Caco-2 (cell line): ENCODE measurements at regions of chr9 and their contacts with region 1.

Region 1: DNA sequence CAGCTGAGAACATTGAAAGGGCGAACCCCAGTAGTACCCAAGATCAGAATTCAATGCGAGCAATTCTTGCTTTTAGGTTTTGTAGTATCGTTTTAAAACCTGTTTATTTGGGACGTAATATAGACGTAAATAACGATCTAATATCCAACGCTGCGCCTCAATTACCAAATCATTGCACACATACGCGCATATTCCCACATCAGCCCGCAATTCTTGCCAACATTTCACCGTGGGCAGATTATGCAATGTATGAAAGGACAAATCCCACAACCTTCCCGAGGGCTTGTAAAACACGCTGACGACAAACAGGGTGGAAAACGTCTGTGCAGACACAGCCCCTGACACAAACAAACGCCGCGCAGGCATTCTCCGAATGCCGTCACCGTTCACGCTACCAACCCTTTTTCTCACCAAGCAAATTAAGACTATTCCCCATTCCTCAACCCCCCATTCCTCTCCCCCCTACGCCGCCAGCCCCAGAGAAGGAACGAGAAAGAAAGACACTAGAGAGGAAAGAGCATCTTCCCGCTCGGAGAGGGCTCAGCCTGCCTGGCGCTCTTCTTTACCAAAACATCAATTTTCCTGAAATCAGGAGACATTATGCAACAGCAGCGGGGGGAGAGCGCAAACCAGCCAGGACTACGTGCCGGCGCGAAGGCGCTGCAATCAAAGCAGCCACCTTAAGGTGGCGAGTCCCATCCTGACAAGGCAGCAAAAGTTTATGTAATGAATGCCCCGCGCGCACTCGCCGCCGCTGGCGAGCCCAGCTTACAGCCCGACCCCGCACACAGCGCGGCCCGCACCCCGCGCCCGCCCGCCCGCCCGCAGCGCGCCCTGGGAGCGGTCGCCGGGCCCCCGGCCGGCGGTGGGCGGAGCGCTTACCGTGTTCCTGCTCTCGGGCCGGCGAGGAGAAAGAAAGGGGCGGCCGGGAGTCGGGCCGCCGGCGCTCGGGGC is 597 bp downstream of the NFIL3 start:
- DNase-seq: peak; percentile 53 to 58
- H3K4me3 ChIP-seq: peak overlapping the region; percentile 63
- H3K4me3 Mint-ChIP-seq: peak overlapping the region; percentile 100
- H3K27ac Mint-ChIP-seq: peak overlapping the region; percentile 96
- H3K4me1 ChIP-seq: peaks cover 11% of the 10 kb centered on the region
- H3K4me1 Mint-ChIP-seq: peaks cover 6% of the 10 kb centered on the region
- H3K27me3 ChIP-seq: no peaks in the 10 kb centered on the region
- H3K27me3 Mint-ChIP-seq: peaks cover under 1% of the 10 kb centered on the region
- CTCF ChIP-seq: no peak

Region 2: DNA sequence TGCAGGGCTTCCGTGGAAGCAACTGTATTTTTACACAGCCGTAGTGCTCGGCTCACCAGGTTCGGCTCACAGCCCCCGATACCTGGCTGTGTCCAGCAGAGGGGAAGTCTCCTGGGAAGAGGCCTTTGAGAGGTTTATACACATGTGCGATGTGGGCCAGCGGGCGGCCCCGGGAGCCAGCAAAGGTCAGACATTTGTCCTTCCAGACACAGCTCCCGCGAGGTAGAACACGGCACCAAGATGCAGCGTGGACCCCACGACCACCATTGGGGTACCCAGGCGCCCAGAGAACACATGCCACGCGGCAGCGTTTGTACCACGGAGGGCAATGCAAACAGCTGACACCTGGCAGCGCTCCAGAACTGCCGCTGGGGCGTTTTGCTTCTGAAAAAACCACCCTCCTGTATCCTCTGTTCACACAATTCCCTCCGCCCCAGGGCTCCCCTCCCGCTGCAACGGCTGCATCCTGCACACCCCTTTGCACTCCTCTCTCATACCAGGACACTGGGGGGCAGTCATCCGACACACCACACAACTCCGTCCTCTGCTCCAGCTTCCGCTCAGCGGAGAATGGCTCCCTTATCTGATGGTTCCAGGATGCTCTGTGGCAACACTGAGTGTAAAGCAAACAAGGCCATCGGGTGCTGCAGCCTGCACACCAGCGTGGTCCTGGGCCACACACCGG is 386.1 kb before region 1 on chr9:
- CTCF ChIA-PET with region 1: interaction called, 7 read pairs
- POLR2A ChIA-PET with region 1: no interaction called
- intact Hi-C with region 1: loop called (anchors 2 kb)
- DNase-seq: peak; percentile 77 to 85
- H3K4me3 ChIP-seq: no peak overlapping the region
- H3K4me3 Mint-ChIP-seq: no peak overlapping the region
- H3K27ac Mint-ChIP-seq: peak overlapping the region; percentile 56
- H3K4me1 ChIP-seq: peaks cover 22% of the 10 kb centered on the region
- H3K4me1 Mint-ChIP-seq: peaks cover 17% of the 10 kb centered on the region
- H3K27me3 ChIP-seq: no peaks in the 10 kb centered on the region
- H3K27me3 Mint-ChIP-seq: no peaks in the 10 kb centered on the region
- CTCF ChIP-seq: peak; percentile 32 to 49

Region 3: DNA sequence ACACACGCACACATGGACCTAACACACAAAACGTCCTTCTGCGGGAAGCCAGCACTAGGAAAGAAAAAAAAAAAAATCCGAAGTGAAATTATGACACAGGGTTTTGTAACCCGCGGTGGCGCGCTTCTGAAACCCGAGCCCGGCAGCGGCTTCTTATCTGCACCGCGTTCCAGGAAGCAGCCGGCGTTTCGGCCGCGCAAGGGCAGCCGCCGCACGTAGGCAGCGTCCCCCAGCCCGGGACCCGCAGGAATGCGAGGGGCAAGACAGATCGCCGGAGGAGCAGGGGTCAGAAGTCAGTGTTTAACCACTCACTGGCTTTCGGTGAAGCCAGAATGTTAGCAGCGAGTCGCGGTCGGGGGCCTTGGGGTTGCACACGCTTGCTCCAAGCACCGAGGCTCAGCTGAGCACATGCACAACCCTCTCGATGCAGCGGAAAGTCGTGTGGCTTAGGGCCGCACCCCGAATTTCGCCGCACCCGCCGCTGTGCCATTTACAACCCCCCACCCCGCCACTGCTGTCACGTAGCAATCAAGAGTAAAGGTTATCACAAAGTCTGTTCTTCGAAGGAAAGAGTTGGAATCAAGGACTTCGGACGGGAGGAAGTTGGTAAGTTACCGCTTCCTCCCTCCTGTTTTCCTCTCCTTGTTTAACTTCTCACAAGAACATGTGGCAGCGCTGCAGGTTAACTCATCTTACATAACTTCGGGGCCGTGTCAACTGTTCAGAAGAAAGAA is 229.2 kb before region 1 on chr9:
- CTCF ChIA-PET with region 1: no interaction called
- POLR2A ChIA-PET with region 1: no interaction called
- intact Hi-C with region 1: loop called (anchors 5 kb)
- DNase-seq: peak; percentile 85 to 91
- H3K4me3 ChIP-seq: peak overlapping the region; percentile 41
- H3K4me3 Mint-ChIP-seq: peak overlapping the region; percentile 86
- H3K27ac Mint-ChIP-seq: peak overlapping the region; percentile 96
- H3K4me1 ChIP-seq: peaks cover 42% of the 10 kb centered on the region
- H3K4me1 Mint-ChIP-seq: no peaks in the 10 kb centered on the region
- H3K27me3 ChIP-seq: no peaks in the 10 kb centered on the region
- H3K27me3 Mint-ChIP-seq: no peaks in the 10 kb centered on the region
- CTCF ChIP-seq: no peak

Region 4: DNA sequence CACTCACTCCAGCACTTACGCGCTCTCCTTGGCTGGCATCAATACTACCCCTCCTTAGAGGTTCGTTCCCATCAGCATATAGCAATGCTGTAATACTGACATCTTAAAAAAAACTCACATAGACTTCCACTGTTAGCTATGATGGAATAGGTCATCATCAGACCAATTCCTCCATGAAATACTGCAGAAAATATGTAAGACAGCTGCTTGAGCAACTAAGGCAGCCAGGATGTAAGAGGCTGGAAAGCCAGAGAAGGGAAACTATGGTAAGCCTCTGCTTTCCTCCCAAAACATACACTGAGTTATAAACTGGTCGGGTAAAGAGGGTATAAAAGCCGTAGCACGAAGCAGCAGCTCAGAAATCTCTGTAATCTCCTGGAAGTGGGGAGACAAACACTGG is 94.8 kb before region 1 on chr9:
- CTCF ChIA-PET with region 1: no interaction called
- POLR2A ChIA-PET with region 1: no interaction called
- intact Hi-C with region 1: no loop called
- DNase-seq: no peak
- H3K4me3 ChIP-seq: no peak overlapping the region
- H3K4me3 Mint-ChIP-seq: no peak overlapping the region
- H3K27ac Mint-ChIP-seq: no peak overlapping the region
- H3K4me1 ChIP-seq: no peaks in the 10 kb centered on the region
- H3K4me1 Mint-ChIP-seq: no peaks in the 10 kb centered on the region
- H3K27me3 ChIP-seq: no peaks in the 10 kb centered on the region
- H3K27me3 Mint-ChIP-seq: no peaks in the 10 kb centered on the region
- CTCF ChIP-seq: no peak

Region 5: DNA sequence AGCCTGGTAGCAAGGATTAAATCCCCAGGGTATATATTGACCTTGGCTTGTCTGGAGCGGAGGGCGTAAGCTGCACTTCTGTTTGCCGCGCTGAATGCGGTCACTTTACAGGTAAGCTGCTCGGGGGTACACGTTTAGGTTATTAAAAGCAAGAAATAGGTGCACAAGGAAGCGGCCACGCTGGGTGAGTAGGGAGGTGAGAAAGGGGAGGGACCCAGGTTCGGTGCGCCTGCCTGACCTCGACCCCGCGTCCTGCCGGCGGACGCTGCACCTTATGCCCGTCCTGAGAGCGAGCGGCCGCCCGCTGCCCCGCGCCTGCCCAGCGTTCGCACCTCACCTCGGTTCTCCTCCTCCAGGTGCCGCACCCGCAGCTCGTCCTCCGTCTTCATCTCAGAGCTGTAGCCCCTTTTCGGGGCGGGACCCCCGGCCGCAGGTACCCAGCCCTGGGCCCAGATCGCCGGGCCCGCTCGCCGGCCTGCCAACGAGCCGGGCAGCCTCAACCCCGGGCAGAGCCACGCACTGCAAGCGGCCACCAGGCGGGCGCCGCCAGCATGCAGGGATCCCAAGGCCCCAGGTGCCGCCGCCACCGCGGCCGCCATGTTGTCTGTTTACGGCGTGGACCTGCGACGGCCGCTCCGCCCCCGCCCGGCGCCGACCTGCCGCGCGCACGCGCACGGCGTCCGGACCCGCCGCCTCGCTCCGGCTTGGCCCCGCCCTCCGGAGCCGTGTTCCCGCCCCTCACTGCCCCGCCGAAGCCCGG is 61.6 kb before region 1 on chr9 and contains the start of gene AUH:
- CTCF ChIA-PET with region 1: interaction called, 3 read pairs
- POLR2A ChIA-PET with region 1: interaction called, 3 read pairs
- intact Hi-C with region 1: loop called (anchors 2 kb)
- DNase-seq: peak; percentile 75 to 83
- H3K4me3 ChIP-seq: peak within 1 kb of the TSS; percentile 93
- H3K4me3 Mint-ChIP-seq: peak within 1 kb of the TSS; percentile 92
- H3K27ac Mint-ChIP-seq: peak within 1 kb of the TSS; percentile 91
- H3K4me1 ChIP-seq: peaks cover 5% of the 10 kb centered on the region; the same call in 1 of the 2 replicates
- H3K4me1 Mint-ChIP-seq: peaks cover 11% of the 10 kb centered on the region
- H3K27me3 ChIP-seq: no peaks in the 10 kb centered on the region
- H3K27me3 Mint-ChIP-seq: no peaks in the 10 kb centered on the region
- CTCF ChIP-seq: no peak
- total RNA-seq, gene AUH: 10.3 TPM in 2 replicates

Region 6: DNA sequence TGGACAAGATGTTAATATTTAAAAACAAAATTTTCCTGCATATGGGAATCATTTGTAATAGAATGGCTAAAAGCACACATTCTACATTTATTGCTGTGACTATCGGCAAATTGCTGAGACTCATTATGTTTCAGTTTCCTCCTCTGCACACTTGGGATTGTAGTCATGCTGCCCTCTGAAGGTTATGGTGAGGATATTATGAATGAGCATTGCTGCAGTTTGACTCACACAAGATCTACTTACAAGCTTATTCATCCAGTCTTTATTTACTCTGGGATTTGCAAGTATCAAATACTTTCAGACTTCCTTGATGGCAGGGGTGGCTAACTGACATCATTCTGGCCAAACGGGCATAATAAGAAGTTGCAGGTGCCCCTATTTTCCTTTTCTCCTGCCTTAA is 10.1 kb after region 1 on chr9:
- CTCF ChIA-PET with region 1: no interaction called
- POLR2A ChIA-PET with region 1: no interaction called
- intact Hi-C with region 1: no loop called
- DNase-seq: peak in 1 of 2 experiments; percentile 22
- H3K4me3 ChIP-seq: no peak overlapping the region
- H3K4me3 Mint-ChIP-seq: no peak overlapping the region
- H3K27ac Mint-ChIP-seq: no peak overlapping the region
- H3K4me1 ChIP-seq: no peaks in the 10 kb centered on the region
- H3K4me1 Mint-ChIP-seq: no peaks in the 10 kb centered on the region
- H3K27me3 ChIP-seq: no peaks in the 10 kb centered on the region
- H3K27me3 Mint-ChIP-seq: peaks cover 4% of the 10 kb centered on the region
- CTCF ChIP-seq: peak; percentile 5 to 32

Region 7: GRCh38 chr9:91659529-91660495 is 236.8 kb after region 1 on chr9:
- CTCF ChIA-PET with region 1: interaction called, 5 read pairs
- POLR2A ChIA-PET with region 1: interaction called, 5 read pairs
- intact Hi-C with region 1: loop called (anchors 10 kb)
- DNase-seq: peak in 1 of 2 experiments; percentile 33
- H3K4me3 ChIP-seq: no peak overlapping the region
- H3K4me3 Mint-ChIP-seq: no peak overlapping the region
- H3K27ac Mint-ChIP-seq: no peak overlapping the region
- H3K4me1 ChIP-seq: peaks cover 6% of the 10 kb centered on the region
- H3K4me1 Mint-ChIP-seq: peaks cover 14% of the 10 kb centered on the region
- H3K27me3 ChIP-seq: no peaks in the 10 kb centered on the region
- H3K27me3 Mint-ChIP-seq: no peaks in the 10 kb centered on the region
- CTCF ChIP-seq: peak; percentile 50 to 65